ENCODE measurements at regions of chr10 and their contacts with region 1.

Region 1: DNA sequence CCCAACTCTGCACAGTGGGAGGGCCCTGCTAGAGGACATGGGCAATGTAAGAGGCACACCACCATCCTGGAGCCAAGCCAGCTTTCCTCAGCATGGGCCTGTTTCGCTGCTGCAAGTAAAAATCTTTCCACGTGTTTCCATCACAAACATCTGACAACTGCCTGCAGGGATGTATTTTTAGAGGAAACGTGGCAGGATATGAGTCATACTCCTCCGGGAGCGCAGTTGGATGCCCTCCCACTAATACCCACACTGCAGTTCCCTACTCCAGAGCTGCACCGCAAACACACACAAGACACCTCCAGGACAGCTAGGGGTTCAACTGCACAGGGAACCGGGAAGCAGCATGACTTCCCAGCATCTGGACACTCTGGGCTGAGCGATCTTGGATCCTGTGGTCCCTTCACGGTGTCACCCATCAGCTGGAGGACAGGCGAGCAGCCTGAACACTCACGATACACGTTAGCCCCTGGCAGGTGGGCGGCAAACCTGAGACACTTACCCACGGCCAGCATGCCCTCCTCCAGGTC is 26.1 kb downstream of the PLAC9 start:
- DNase-seq: peak; percentile 83
- H3K4me3 Mint-ChIP-seq: peak overlapping the region; percentile 23
- H3K27ac Mint-ChIP-seq: peak overlapping the region; percentile 82
- H3K4me1 Mint-ChIP-seq: peaks cover 79% of the 10 kb centered on the region
- H3K27me3 Mint-ChIP-seq: no peaks in the 10 kb centered on the region
- CTCF ChIP-seq: no peak

Region 2: DNA sequence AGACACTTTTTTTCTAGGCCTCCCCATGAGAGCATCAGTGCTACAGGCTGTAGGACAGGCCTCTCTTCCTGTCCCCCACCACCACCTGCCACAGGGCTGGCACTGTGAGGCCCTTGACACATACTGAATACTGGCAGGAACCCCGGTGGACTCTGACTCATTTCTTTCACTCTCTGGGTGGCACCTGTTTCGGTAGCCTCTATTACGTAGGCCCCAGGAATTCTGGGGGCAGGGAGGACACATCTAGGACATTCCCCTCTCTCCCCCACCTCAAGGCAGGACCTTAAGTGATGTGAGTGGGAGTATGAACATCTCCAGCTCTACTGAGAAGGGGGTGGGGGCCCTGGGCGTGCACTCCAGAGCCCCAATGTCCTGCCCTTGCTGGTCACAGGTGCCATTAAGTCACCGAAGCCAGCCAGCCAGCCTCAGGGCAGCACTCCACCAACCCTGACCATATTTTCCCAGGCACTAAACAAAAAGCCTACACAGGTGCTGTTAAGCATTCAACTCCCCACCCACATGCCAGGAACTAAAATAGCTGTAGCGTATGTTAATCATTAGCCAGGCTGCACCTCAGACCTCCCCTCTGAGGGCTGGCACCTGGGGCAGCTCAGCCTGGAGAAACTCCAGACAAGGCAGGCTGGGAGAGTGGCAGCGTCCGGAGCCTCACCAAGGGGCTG is 37.7 kb after region 1 on chr10:
- CTCF ChIA-PET with region 1: interaction called, 5 read pairs
- intact Hi-C with region 1: loop called (anchors 2 kb)
- DNase-seq: peak; percentile 95
- H3K4me3 Mint-ChIP-seq: peak overlapping the region; percentile 86
- H3K27ac Mint-ChIP-seq: peak overlapping the region; percentile 94
- H3K4me1 Mint-ChIP-seq: peaks cover 76% of the 10 kb centered on the region
- H3K27me3 Mint-ChIP-seq: no peaks in the 10 kb centered on the region
- CTCF ChIP-seq: no peak

Region 3: DNA sequence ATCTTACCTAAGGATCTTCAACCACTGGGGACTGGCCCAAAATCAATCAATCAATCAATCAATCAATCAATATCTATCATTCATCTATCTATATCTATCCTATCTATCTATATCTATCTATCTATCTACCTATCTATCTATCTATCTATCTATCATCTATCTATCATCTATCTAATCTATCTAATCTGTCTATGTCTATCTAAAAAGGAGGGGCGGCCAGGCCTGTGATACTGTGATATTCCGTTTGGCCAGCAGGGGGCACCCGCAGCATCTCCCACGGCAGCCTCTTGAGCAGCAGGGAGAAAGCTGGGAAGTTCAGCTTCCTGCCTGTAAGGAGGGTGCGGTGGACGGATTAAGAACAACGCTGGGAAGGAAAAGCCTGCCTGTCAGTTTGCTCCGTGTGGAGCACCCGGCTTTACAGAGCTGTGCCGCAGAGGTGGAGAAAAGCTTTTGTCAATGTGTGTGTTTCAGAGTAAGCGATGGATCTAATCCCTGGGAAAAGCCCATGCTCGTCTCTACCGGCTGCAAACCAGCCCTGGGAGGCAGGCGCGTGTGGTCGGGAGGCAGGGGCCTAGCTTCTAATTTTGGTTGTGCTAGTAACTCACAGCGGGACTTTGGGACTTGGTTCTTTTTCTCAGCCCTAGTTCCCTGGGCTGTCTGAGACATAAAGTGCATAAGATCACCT is 504.1 kb after region 1 on chr10:
- CTCF ChIA-PET with region 1: no interaction called
- intact Hi-C with region 1: no loop called
- DNase-seq: peak; percentile 93
- H3K4me3 Mint-ChIP-seq: peak overlapping the region; percentile 43
- H3K27ac Mint-ChIP-seq: peak overlapping the region; percentile 18
- H3K4me1 Mint-ChIP-seq: peaks cover 10% of the 10 kb centered on the region
- H3K27me3 Mint-ChIP-seq: peaks cover 61% of the 10 kb centered on the region
- CTCF ChIP-seq: peak; percentile 89

Measured in Calu3 (cell line).